GM13976 (cell line): ENCODE measurements at regions of chr16 and their contacts with region 1.

Region 1: DNA sequence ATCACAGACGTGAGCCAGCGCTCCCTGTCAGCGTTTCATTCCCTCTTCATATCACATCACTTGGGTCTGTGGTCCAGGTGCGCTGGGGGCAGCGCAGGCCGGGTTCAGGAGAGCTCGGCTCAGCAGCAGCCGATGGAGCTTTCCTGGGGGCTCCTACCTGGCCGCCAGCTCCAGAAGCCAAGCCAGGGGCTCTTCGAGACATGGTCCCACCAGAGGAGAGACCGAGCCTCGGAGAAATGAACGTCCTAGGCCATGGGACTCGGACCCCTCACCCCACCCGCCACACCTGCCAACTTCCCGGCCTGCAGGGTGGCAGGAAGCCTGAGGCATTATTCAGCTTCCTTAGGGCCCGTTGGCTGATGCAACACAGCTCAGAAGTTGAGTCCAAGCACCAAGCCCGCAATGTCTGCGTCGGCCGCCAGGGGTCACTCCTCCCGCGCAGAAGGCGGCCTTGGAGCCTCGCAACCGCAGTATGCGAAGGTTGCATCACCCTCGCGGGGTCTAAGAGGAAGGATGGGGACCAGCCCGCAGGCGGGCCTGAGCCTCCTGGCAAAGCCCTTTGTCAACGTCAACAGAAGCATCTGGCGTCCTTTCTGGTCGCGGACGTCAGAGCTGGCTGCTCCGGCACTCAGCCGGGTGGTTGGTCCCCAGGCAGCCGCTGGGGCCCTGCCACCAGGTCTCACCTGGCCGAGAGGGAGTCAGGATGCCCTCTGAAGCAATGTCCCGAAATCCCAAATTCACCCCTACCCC is 13.2 kb upstream of the KLHDC4 start:
- DNase-seq: peak; percentile 87
- CTCF ChIP-seq: peak; percentile 95

Region 2: GRCh38 chr16:86865524-86866301 is 913.3 kb before region 1 on chr16:
- in situ Hi-C with region 1: no loop called
- DNase-seq: no peak
- CTCF ChIP-seq: no peak

Region 3: DNA sequence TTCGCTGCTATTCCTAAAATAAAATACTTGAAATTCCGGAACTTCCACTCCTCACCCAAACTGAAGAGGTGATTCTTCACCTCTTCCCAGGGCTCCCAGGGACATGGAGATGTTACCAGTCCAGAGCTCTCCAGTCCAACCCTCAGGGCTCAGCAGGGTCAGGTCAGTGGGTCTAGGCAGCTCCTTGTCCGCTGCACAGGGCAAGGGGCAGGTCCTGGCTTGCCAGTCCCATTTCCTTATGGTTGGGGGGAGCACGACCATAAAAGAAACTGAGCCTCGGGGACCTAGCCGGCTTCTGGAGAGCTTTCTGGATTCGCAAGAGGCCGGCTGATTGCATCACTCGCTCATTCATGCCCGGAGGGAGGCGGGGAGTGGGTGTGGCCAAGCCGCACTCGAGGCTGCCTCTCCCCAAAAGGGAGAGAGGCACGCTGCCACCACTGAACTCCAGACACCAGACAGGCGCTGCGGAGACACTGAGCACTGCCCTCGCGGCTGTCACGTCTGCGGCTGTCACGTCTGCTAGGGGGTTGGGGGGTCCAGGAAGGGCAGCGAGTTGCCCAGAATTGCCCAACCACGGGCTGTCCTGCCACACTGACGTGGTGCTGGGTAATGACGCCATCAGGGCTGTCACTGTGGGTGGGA is 74.5 kb after region 1 on chr16:
- in situ Hi-C with region 1: loop called (anchors 5 kb)
- DNase-seq: peak; percentile 92
- CTCF ChIP-seq: no peak

Region 4: GRCh38 chr16:88886845-88887521 is 1108.0 kb after region 1 on chr16:
- in situ Hi-C with region 1: no loop called
- DNase-seq: no peak
- CTCF ChIP-seq: no peak